HEK293T (cell line): ENCODE measurements at regions of chr17 and their contacts with region 1.

Region 1: DNA sequence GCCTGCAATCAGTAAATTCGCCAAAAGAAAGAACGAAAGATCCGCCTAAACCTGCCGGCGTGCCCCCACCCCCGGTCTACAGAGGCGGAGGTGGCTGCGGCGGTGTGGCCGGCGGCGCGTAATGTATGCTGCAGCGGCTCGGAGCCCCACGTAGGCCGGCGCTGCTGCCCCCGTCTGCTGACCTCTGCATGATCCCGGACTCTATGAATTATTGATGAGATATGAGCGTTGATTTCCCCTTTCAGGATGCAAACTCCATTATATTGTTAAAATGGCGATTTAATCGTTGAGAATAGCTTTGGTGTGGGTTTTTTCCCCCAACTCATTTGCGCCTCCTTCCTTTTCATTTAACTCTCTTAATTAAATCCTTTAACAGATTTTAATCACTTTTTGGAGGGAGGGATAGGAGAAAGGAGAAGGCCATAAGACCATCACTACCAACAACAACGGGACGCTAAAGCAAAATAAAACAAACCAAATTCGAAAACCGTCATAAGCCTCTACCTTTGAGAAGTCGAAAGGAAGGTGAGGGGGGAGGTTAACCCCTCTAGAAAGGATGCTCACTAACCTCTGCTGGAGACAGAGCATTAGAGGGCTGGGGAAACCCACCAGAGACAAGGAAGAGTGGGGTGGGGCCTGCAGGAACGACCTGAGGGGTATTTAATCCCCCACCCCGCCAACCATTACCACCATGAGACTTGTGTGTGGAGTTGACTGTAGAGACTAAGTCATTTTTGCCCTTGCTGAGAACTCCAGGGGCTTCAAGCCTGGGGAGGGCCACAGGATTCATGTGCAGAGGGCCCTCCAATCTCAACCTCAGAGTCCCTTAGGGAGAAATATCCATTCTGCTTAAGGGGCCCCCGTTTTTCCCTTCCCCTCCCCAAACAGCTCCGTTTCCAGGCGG is 3.4 kb downstream of the HOXB3 start:
- DNase-seq: no peak

Region 2: GRCh38 chr17:48483471-48484131 is 103.0 kb before region 1 on chr17:
- CTCF ChIA-PET with region 1: no interaction called
- POLR2A ChIA-PET with region 1: no interaction called
- DNase-seq: no peak

Region 3: GRCh38 chr17:48610282-48611211 is 23.9 kb after region 1 on chr17 and contains the start of gene HOXB7:
- CTCF ChIA-PET with region 1: interaction called, 8 read pairs
- POLR2A ChIA-PET with region 1: interaction called, 23 read pairs
- DNase-seq: no peak

Region 4: DNA sequence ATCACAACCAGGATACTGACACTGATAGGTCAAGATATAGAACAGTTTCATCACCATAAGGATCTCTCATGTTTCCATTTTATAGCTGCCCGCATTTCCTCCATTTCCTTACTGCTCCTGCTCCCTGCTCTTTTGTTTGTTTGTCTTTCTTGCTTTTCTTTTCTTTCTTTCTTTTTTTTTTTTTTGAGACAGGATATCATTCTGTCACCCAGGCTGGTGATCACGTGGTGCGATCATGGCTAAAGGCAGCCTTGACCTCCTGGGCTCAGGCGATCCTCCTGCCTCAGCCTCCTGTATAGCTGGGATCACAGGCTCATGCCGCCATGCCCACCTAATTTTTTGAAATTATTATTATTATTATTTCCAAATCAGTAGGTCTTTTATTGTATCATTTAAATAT is 104.0 kb after region 1 on chr17:
- CTCF ChIA-PET with region 1: no interaction called
- POLR2A ChIA-PET with region 1: no interaction called
- DNase-seq: no peak